Heart left ventricle (tissue), 16 donors: ENCODE measurements at regions of chr13 and their contacts with region 1.

Region 1: GRCh38 chr13:50911937-50912795 is 2.6 kb downstream of the RNASEH2B start:
- DNase-seq: peak; percentile 84 to 90 (median 86)
- ATAC-seq: peak; percentile 45 to 60 (median 52)
- H3K4me3 ChIP-seq: peak overlapping the region in 1 of 12 donors; percentile 70
- H3K27ac ChIP-seq: peak overlapping the region in 8 of 12 donors; percentile 1 to 93 (median 66)
- H3K4me1 ChIP-seq: peaks cover 0 to 70% (median 46%) of the 10 kb centered on the region in 12 donors
- H3K27me3 ChIP-seq: no peaks in the 10 kb centered on the region
- CTCF ChIP-seq: peak; percentile 77 to 91 (median 86)
- POLR2A ChIP-seq: no peak

Region 2: DNA sequence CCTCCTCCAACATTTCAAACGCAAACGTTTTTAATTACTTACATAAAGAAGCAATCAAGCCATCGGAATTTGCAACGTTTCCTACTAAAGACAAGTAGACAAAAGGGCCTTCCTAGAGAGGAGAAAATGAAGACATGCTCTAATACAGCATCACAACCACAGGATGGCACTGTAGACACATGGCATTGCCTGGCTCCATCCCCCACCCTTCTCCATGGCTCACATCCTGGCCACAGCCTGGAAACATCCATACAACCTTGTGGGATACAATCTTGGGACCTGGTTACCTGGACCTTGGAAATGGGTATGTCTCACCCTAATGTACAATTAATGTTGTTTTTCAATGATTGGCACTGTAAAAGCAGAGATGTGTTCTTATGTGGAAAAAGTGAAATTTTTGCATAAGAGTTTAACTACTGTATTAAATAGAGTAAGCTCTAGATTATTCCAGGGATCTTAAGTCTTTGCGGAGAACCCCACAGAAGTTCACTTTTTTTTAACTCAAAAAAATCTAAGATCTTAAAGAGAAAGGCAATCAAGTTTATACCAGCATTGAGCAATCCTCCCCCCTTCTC is 1242.3 kb before region 1 on chr13:
- intact Hi-C with region 1: loop called in 1 of 10 experiments (anchors 10 kb)
- DNase-seq: peak in 4 of 5 donors; percentile 36 to 53 (median 48)
- ATAC-seq: peak; percentile 89 to 96 (median 93)
- H3K4me3 ChIP-seq: no peak overlapping the region
- H3K27ac ChIP-seq: no peak overlapping the region
- H3K4me1 ChIP-seq: peaks cover 0 to 9% (median 0%) of the 10 kb centered on the region in 12 donors
- H3K27me3 ChIP-seq: no peaks in the 10 kb centered on the region
- CTCF ChIP-seq: peak; percentile 55 to 84 (median 65)
- POLR2A ChIP-seq: no peak

Region 3: GRCh38 chr13:49996951-49997895 is 914.9 kb before region 1 on chr13 and contains the start of gene TRIM13:
- intact Hi-C with region 1: loop called in 2 of 10 experiments (anchors 5 kb)
- DNase-seq: peak; percentile 89 to 95 (median 93)
- ATAC-seq: peak; percentile 89 to 94 (median 91)
- H3K4me3 ChIP-seq: peak within 1 kb of the TSS; percentile 60 to 91 (median 85)
- H3K27ac ChIP-seq: peak within 1 kb of the TSS; percentile 96 to 100 (median 98)
- H3K4me1 ChIP-seq: peaks cover 9 to 58% (median 39%) of the 10 kb centered on the region in 12 donors
- H3K27me3 ChIP-seq: no peaks in the 10 kb centered on the region
- CTCF ChIP-seq: peak; percentile 42 to 95 (median 76)
- POLR2A ChIP-seq: peak in 1 of 2 donors; percentile 69
- total RNA-seq, gene TRIM13: 14.6 to 26.9 (median 19.1) TPM

Region 4: DNA sequence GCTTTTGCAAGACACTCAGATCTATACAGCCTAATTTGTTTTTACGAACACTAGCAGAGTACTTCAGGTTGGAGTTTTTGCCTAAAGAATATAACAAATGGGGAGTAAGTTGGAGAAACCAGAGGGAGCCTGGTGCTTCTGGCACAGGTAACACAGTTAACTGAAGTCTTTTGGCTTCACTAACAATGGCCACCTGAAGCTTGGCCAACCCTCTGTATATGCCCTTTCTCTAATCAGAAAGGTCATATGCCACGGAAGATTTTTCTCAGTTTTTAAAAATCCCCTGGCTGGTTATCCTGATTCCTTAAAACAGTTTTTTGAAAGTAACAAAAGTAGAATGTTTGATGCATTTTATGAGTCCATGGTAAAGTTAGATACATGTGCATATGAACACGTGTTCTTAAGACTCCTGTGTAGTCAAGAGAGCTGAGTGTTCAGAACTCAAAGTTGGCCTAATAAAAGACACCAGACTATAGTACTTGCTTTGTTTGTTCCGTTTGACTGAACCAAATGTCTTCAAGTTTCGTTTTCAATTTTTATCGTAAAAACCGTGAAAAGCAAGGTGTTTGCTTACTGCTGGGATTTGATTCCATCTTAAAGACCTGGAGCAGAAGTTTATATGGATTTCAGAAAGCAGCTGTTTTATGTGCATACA is 759.4 kb before region 1 on chr13:
- intact Hi-C with region 1: loop called in 1 of 10 experiments (anchors 10 kb)
- DNase-seq: no peak
- ATAC-seq: no peak
- H3K4me3 ChIP-seq: peak overlapping the region in 8 of 12 donors; percentile 1 to 42 (median 26)
- H3K27ac ChIP-seq: peak overlapping the region in 1 of 12 donors; percentile 17
- H3K4me1 ChIP-seq: peaks cover 0 to 26% (median 11%) of the 10 kb centered on the region in 12 donors
- H3K27me3 ChIP-seq: no peaks in the 10 kb centered on the region
- CTCF ChIP-seq: no peak
- POLR2A ChIP-seq: no peak

Region 5: GRCh38 chr13:50693727-50694126 is 218.4 kb before region 1 on chr13:
- intact Hi-C with region 1: loop called in 1 of 10 experiments (anchors 10 kb)
- DNase-seq: peak; percentile 66 to 78 (median 72)
- ATAC-seq: peak; percentile 94 to 97 (median 96)
- H3K4me3 ChIP-seq: no peak overlapping the region
- H3K27ac ChIP-seq: peak overlapping the region; percentile 56 to 82 (median 76)
- H3K4me1 ChIP-seq: peaks cover 3 to 68% (median 44%) of the 10 kb centered on the region in 12 donors
- H3K27me3 ChIP-seq: no peaks in the 10 kb centered on the region
- CTCF ChIP-seq: no peak
- POLR2A ChIP-seq: no peak